HEK293 (cell line): ENCODE measurements at regions of chr15 and their contacts with region 1.

Region 1: DNA sequence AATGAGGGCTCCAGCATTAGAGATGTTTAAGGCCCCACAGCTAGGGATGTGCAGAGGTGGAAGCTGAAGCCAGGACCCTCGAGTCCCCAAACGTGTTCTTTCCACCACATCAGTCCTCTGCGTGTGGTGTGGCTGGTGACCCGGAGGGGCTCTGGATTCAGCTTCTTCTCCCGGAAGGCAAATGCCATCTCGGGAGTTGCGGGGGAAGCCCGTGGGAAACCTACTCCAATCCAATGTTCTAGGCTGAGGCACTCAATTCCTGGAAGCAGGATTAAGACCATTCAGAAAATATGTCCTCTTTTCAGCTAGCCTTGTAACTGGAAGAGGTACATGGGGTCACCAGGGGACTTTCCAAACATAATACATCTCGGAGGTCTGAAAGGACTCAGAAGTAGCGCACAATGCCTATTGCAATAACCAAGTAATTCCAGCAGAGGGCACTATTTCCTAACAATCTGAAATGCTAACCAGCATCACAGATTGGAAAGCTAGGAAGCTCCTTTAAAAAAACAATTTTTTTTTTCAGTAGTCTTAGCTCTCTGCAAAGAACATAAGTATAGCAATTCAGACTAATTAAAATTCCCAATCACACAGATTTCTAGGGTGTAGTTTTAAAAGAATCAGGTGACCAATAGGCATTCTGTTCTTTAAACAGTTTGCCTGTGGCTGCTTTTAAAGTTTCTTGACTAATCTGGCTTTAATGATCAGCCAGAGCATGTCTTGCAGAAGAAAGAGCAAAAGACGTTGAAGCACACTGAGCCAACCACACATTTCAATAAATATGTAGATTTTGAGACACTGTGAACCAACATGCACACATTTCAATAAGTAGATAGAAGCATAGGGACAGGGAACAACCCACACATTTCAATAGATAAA is 36.1 kb downstream of the BNC1 start:
- H3K4me3 ChIP-seq: no peak overlapping the region
- H3K27ac ChIP-seq: no peak overlapping the region
- H3K4me1 ChIP-seq: no peaks in the 10 kb centered on the region
- CTCF ChIP-seq: peak; percentile 45

Region 2: DNA sequence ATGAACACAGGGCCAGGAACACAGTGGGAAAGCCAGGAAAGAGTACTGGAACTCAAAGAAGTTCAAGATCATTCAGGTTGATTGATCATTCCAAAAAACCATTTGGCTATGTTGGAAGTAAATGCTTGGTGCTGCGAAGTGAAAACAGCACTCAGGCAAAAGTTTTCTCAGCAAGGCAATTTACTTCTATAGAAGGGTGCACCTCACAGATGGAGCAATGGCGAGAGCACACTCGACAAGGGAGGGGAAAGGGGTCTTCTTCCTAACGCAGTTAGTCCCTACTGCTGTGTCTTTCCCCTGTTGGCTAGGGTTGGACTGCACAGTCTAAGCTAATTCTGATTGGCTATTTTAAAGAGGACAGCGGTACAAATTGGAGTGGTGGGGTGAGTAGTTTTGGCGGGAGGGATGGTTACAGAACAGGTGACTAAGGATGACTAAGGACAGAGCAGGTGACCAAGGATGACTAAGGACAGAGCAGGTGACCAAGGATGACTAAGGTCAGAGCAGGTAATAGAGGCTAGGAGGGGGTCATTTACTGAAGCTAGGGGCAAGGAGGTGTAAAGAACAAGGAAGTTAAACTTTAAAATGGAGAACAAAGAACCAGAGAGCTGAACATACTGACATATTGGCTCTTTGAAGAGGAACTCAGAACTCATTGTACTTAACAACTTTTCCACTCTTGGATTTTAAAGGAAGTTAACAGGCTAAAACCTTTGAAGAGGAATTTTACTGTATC is 339.1 kb before region 1 on chr15:
- CTCF ChIA-PET with region 1: no interaction called
- POLR2A ChIA-PET with region 1: no interaction called
- H3K4me3 ChIP-seq: no peak overlapping the region
- H3K27ac ChIP-seq: no peak overlapping the region
- H3K4me1 ChIP-seq: peaks cover 4% of the 10 kb centered on the region
- CTCF ChIP-seq: no peak

Region 3: DNA sequence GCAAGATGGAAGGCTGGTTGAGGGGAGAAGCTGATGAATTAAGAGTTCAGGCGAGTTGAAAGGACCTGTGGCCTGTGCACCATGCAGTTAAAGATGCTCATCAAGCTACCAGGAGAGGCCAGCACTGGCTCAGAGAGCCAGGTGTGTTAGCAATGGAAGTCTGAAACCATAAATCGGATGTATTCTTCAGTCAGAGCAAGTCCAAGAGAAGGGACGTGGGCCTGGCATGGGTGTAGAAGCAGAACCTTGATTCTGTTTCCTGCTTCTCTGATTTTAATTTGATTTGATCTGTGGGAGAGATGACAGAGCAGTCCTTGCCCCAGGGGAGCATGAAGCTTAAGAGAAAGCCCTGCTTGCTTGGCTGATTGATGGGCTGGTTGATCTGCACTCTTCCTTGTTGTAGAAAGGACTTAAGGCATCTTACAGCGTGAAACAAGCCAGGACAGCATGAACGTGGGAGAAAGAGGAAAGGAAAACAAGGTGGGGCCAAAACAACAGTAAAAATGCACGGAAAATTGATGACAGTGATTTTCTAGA is 130.0 kb before region 1 on chr15:
- CTCF ChIA-PET with region 1: no interaction called
- POLR2A ChIA-PET with region 1: no interaction called
- H3K4me3 ChIP-seq: no peak overlapping the region
- H3K27ac ChIP-seq: no peak overlapping the region
- H3K4me1 ChIP-seq: no peaks in the 10 kb centered on the region
- CTCF ChIP-seq: no peak

Region 4: DNA sequence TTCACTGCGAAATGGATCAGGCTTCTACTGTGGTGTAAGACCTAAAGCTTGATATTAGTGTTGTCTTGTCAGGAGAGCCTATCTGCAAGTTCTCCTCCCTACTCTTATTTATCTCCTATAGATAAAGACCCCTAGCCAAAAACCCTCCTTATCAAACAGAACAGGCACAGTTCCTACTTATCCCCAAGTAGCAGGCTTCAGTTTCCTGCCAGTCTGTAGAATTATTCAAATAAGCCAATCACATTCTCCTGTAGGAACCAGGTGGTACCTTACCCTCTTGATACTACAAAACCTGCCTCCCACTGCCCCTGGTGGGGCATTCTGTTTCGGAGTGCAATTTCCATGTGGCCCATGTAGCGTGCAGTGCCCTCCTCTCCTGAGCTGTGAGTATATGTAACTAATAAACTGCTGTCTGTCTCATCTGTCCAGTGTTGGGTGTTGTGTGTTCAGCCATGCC is 69.5 kb before region 1 on chr15:
- CTCF ChIA-PET with region 1: no interaction called
- POLR2A ChIA-PET with region 1: no interaction called
- H3K4me3 ChIP-seq: no peak overlapping the region
- H3K27ac ChIP-seq: no peak overlapping the region
- H3K4me1 ChIP-seq: no peaks in the 10 kb centered on the region; the same call in 1 of the 2 replicates
- CTCF ChIP-seq: no peak

Region 5: GRCh38 chr15:83278173-83278572 is 29.8 kb after region 1 on chr15:
- CTCF ChIA-PET with region 1: interaction called, 12 read pairs
- POLR2A ChIA-PET with region 1: no interaction called
- H3K4me3 ChIP-seq: no peak overlapping the region
- H3K27ac ChIP-seq: no peak overlapping the region
- H3K4me1 ChIP-seq: no peaks in the 10 kb centered on the region
- CTCF ChIP-seq: no peak

Region 6: DNA sequence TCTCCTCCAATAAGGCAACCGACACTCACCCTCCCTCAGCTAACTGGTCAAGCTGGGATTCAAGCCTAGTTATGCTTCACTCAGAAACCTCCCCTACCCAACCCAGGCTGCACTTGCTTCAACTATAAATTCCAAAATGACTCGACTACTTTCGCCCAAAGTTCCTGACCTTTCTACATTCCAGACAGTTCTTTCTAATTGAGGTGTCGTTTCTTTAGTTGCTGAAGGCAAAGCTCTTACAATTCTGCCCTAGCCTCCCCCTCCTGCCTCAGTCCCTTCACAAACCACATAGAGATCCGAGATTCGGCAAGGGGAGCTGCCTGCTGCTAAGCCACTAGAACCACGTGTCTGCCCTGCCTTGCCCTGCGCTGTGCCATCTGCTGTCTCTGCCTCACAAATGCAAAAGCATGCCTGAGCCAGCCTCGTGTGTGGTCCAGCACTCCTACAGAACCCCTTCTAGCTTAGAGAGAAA is 124.1 kb after region 1 on chr15:
- CTCF ChIA-PET with region 1: interaction called, 12 read pairs
- POLR2A ChIA-PET with region 1: no interaction called
- H3K4me3 ChIP-seq: no peak overlapping the region
- H3K27ac ChIP-seq: no peak overlapping the region
- H3K4me1 ChIP-seq: no peaks in the 10 kb centered on the region
- CTCF ChIP-seq: no peak

Region 7: DNA sequence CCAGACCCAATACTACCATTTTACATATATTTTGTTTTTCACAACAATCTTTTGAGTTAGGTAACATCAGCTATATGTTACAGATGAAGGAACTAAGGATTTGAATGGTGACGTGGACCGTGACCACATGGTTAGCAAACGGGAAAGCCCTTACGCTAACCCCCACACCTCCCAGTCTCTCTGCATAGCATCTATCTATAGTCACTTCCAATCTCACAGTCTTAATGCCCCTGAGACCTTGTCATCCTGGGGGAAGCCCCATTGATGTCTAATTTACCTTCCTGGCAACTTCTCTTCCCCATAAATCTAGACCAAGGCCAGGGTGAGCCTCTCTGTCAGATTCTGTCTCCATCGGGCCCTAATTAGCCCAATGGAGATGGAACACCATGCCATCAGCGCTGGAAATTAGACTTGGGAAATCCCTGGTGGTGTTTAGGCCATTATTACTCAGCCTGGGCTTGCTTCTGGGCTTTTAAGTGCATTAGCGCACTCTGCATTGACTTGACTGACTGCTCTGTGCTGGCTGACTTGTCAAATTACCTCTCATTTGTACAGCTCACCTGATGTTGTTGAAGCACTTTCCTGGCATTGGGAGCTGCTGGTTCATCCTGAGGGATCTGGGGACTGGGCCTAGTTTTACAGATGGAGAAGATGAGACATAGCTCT is 164.8 kb after region 1 on chr15:
- CTCF ChIA-PET with region 1: interaction called, 10 read pairs
- POLR2A ChIA-PET with region 1: no interaction called
- H3K4me3 ChIP-seq: no peak overlapping the region
- H3K27ac ChIP-seq: no peak overlapping the region
- H3K4me1 ChIP-seq: no peaks in the 10 kb centered on the region
- CTCF ChIP-seq: no peak

Region 8: DNA sequence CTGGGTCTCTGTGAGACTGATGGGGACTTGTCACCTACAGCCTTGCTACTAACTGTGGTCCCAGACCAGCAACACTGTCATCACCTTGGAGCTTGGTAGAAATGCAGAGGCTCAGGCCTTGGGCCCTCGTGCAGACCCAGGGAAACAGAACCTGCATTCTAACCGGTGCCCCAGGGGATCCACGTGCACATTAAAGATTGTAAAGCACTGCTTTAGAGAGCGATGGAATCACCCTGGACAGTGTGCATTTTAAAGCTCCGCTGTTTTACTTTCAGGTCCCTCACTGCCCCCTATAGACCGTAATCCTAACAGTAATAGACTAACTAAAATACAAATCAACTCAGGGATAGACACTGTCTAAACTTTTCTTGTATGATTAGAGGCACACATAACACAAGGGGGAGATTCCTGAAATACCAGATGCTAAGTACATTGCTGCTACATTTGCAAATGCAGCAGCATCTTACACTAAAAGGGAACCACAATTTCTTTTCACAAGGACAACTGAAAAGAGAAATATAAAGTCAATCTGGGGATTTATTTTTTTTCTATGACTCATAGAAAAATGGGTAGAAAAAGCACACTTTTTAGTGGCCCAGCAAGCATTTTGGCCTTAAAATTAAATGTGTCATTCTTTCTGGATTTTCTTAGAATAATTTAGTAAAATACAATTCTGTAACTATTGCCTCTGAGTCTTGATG is 188.2 kb after region 1 on chr15:
- CTCF ChIA-PET with region 1: interaction called, 323 read pairs
- POLR2A ChIA-PET with region 1: no interaction called
- H3K4me3 ChIP-seq: no peak overlapping the region
- H3K27ac ChIP-seq: no peak overlapping the region
- H3K4me1 ChIP-seq: no peaks in the 10 kb centered on the region
- CTCF ChIP-seq: peak; percentile 45

Region 9: DNA sequence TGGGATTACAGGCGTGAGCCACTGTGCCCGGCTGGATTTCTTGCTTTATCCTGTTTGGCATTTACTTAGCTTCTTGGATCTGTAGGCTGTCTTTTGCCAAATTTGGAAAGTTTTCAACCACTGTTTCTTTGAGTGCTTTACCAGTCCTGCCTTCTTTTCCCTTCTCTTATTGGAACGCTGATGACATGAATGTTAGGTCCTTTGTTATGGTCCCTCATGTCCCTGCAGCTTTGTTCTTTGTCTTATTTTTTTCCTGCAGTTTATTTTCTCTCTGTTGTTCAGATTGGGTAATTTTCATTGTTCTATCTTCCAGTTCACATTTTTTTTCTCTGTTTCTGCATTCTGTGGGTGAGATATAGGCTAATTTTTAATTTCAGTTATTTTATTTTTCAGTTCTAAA is 223.8 kb after region 1 on chr15:
- CTCF ChIA-PET with region 1: no interaction called
- POLR2A ChIA-PET with region 1: no interaction called
- H3K4me3 ChIP-seq: no peak overlapping the region
- H3K27ac ChIP-seq: no peak overlapping the region
- H3K4me1 ChIP-seq: peaks cover 3% of the 10 kb centered on the region
- CTCF ChIP-seq: no peak

Region 10: GRCh38 chr15:83559310-83559966 is 311.0 kb after region 1 on chr15:
- CTCF ChIA-PET with region 1: interaction called, 120 read pairs
- POLR2A ChIA-PET with region 1: no interaction called
- H3K4me3 ChIP-seq: no peak overlapping the region
- H3K27ac ChIP-seq: no peak overlapping the region
- H3K4me1 ChIP-seq: no peaks in the 10 kb centered on the region
- CTCF ChIP-seq: peak; percentile 69; the same call in 1 of the 2 replicates